ENCODE measurements at regions of chr14 and their contacts with region 1.

Region 1: DNA sequence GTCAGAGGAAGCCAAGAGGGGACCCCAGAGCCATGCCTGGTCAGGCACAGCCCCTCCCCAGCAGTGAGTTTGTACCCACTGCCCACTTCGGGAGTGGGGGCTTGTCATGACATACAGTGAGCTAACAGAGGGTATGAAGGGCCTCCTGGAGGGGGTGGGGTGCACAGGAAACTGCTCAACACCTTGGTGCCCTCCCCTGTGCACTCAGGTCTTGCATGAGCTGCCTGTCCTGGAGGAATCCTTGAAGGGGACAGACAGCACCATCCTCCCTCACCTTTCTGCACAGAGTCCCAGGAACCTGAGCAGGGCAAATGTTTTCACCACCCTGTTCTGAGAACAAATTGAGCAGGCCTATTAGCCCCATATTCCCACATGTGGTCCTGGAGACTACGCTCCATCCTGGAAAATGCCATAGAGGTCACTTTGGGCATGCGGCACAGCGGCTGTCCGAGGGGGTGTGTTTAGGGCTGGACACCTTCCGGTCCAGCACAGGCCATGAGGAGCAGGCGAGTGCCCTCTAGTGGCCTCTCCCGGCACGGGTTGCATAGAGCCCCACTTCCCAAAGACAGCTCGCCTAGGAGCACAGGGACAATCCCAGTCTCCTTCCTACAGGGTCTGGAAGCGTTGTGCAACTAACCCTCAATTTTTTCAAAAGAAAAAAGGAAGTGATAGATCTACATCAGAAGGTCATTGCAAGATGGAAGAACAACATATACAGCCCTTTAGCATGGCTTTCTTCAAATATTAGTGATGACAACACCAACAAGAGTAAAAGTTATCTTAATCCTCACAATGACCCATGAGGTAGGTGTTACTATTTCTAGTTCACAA is 31.9 kb upstream of the ZFP36L1 start:
- DNase-seq: peak in 1 of 9 donors; percentile 61
- ATAC-seq: peak; percentile 70
- H3K4me3 ChIP-seq: no peak overlapping the region
- H3K4me3 Mint-ChIP-seq: peak overlapping the region in 1 of 10 donors; percentile 16
- H3K27ac ChIP-seq: no peak overlapping the region
- H3K27ac Mint-ChIP-seq: peak overlapping the region in 2 of 9 donors; percentile 22 to 68
- H3K4me1 ChIP-seq: peaks cover 15 to 27% of the 10 kb centered on the region in 2 donors
- H3K4me1 Mint-ChIP-seq: peaks cover 6 to 38% (median 29%) of the 10 kb centered on the region in 7 donors
- H3K27me3 ChIP-seq: no peaks in the 10 kb centered on the region
- H3K27me3 Mint-ChIP-seq: peaks cover 0 to 10% (median 0%) of the 10 kb centered on the region in 5 donors

Region 2: GRCh38 chr14:67883717-67884116 is 941.0 kb before region 1 on chr14:
- CTCF ChIA-PET with region 1: no interaction called
- POLR2A ChIA-PET with region 1: interaction called, 3 read pairs
- intact Hi-C with region 1: loop called in 1 of 2 experiments (anchors 5 kb)
- DNase-seq: peak in 4 of 9 donors; percentile 3 to 9 (median 6)
- ATAC-seq: no peak
- H3K4me3 ChIP-seq: no peak overlapping the region
- H3K4me3 Mint-ChIP-seq: no peak overlapping the region
- H3K27ac ChIP-seq: no peak overlapping the region
- H3K27ac Mint-ChIP-seq: no peak overlapping the region
- H3K4me1 ChIP-seq: peaks cover 0 to 14% of the 10 kb centered on the region in 2 donors
- H3K4me1 Mint-ChIP-seq: peaks cover 13 to 36% (median 28%) of the 10 kb centered on the region in 7 donors
- H3K27me3 ChIP-seq: no peaks in the 10 kb centered on the region
- H3K27me3 Mint-ChIP-seq: no peaks in the 10 kb centered on the region

Region 3: DNA sequence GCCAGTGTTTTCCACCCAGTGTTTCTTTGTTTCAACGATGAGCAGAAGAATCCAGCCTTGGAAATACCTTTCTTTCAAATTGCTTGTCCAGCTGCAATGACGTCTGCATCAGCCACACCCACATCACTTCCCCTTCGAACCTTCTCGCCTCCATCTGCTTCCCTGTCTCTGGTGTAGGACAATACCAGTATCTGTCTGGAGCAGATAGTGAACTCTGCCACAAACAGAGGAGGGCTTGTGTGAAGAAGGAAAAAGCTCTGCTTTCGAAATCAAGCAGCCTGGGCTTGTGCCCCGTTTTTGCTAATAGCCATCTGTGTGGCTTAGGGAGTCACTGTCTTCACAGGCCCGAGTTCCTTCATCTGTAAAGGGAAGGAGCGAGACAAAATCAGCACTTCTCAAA is 447.3 kb before region 1 on chr14:
- CTCF ChIA-PET with region 1: no interaction called
- POLR2A ChIA-PET with region 1: no interaction called
- intact Hi-C with region 1: no loop called
- DNase-seq: no peak
- ATAC-seq: peak; percentile 62
- H3K4me3 ChIP-seq: no peak overlapping the region
- H3K4me3 Mint-ChIP-seq: peak overlapping the region in 7 of 10 donors; percentile 29 to 72 (median 59)
- H3K27ac ChIP-seq: peak overlapping the region; percentile 37
- H3K27ac Mint-ChIP-seq: peak overlapping the region in 7 of 9 donors; percentile 69 to 89 (median 81)
- H3K4me1 ChIP-seq: peaks cover 0 to 38% of the 10 kb centered on the region in 2 donors
- H3K4me1 Mint-ChIP-seq: peaks cover 30 to 84% (median 72%) of the 10 kb centered on the region in 7 donors
- H3K27me3 ChIP-seq: no peaks in the 10 kb centered on the region
- H3K27me3 Mint-ChIP-seq: no peaks in the 10 kb centered on the region